Dorsolateral prefrontal cortex (tissue), 120 donors: ENCODE measurements at regions of chr7 and their contacts with region 1.

Region 1: GRCh38 chr7:148385009-148385682 is 205.4 kb upstream of the C7orf33 start:
- DNase-seq: peak in 9 of 10 donors; percentile 34 to 82 (median 67)
- H3K4me3 ChIP-seq: peak overlapping the region in 20 of 59 donors; percentile 3 to 51 (median 13)
- H3K27ac ChIP-seq: peak overlapping the region in 55 of 59 donors; percentile 12 to 93 (median 79)
- H3K27me3 ChIP-seq: no peaks in the 10 kb centered on the region
- CTCF ChIP-seq: peak in 23 of 56 donors; percentile 7 to 52 (median 25)

Region 2: DNA sequence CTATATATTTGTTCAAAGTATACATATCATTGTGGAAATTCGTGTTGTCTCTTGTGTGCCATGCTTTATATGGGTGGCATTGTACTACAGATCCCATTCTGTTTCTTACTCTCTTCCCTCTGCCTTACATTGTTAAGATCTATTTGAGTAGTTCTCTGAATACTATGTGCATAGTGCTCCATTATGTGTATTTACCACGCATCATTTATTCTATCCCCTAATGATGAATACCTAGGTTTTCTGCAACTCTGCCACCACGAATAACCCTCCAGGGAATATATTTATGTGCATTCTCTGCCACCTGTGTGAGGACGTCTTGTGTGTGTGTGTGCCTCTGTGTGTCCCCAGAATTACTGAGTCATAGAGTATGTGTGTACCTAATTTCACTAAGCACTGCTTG is 225.8 kb before region 1 on chr7:
- intact Hi-C with region 1: no loop called
- DNase-seq: no peak
- H3K4me3 ChIP-seq: no peak overlapping the region
- H3K27ac ChIP-seq: no peak overlapping the region
- H3K27me3 ChIP-seq: no peaks in the 10 kb centered on the region
- CTCF ChIP-seq: no peak

Region 3: GRCh38 chr7:148262721-148263229 is 122.4 kb before region 1 on chr7:
- intact Hi-C with region 1: loop called in 1 of 2 experiments (anchors 10 kb)
- DNase-seq: peak; percentile 62 to 88 (median 78)
- H3K4me3 ChIP-seq: peak overlapping the region in 58 of 59 donors; percentile 3 to 61 (median 40)
- H3K27ac ChIP-seq: peak overlapping the region in 36 of 59 donors; percentile 1 to 80 (median 54)
- H3K27me3 ChIP-seq: no peaks in the 10 kb centered on the region
- CTCF ChIP-seq: peak; percentile 84 to 99 (median 96)

Region 4: DNA sequence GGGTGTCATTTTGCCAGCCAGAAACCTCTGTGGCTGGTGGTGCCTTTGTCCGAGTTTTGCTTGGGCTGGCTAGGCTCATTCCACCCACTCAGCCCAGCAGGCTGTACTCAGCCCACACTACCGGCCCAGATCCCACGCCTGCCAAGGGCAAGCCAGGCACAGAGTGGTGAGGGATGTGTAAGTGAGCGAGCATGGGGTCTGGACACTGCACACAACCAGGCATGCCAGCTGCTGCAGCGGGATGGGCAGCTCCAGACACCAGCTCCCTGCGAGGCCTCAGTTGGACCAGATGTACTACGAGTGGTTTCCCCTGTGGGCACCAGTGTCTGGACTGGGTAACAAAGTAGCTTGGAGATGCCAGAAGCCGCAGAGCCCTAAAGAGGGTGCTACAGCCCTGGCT is 71.2 kb after region 1 on chr7:
- intact Hi-C with region 1: no loop called
- DNase-seq: no peak
- H3K4me3 ChIP-seq: no peak overlapping the region
- H3K27ac ChIP-seq: no peak overlapping the region
- H3K27me3 ChIP-seq: peaks cover 0 to 6% (median 0%) of the 10 kb centered on the region in 45 donors
- CTCF ChIP-seq: no peak